Right cardiac atrium (tissue), 5 donors: ENCODE measurements at regions of chr4 and their contacts with region 1.

Region 1: GRCh38 chr4:47836641-47837093 is 1.2 kb downstream of the CORIN start:
- DNase-seq: peak; percentile 81 to 92 (median 91)
- ATAC-seq: peak; percentile 94 to 96
- H3K4me3 ChIP-seq: peak overlapping the region; percentile 50
- H3K27ac ChIP-seq: peak overlapping the region; percentile 48
- H3K4me1 ChIP-seq: no peaks in the 10 kb centered on the region
- H3K27me3 ChIP-seq: no peaks in the 10 kb centered on the region

Region 2: GRCh38 chr4:47704693-47705325 is 131.9 kb before region 1 on chr4:
- intact Hi-C with region 1: loop called (anchors 2 to 10 kb)
- DNase-seq: peak; percentile 25 to 64 (median 38)
- ATAC-seq: peak; percentile 87 to 91
- H3K4me3 ChIP-seq: peak overlapping the region; percentile 55
- H3K27ac ChIP-seq: no peak overlapping the region
- H3K4me1 ChIP-seq: no peaks in the 10 kb centered on the region
- H3K27me3 ChIP-seq: no peaks in the 10 kb centered on the region